ENCODE measurements at regions of chr1 and their contacts with region 1.

Region 1: GRCh38 chr1:94854458-94855306 is 34.5 kb downstream of the SLC44A3 start:
- DNase-seq: peak; percentile 83
- ATAC-seq: peak; percentile 96 to 97
- H3K4me3 ChIP-seq: peak overlapping the region; percentile 50
- H3K27ac ChIP-seq: peak overlapping the region; percentile 80 to 89
- H3K4me1 ChIP-seq: peaks cover 17% of the 10 kb centered on the region
- CTCF ChIP-seq: peak; percentile 72
- EP300 ChIP-seq: no peak
- POLR2A ChIP-seq: no peak
- RAD21 ChIP-seq: peak; percentile 89 to 91

Region 2: GRCh38 chr1:94843430-94843829 is 11.3 kb before region 1 on chr1:
- CTCF ChIA-PET with region 1: interaction called, 37 read pairs
- POLR2A ChIA-PET with region 1: interaction called, 4 read pairs
- DNase-seq: no peak
- ATAC-seq: no peak
- H3K4me3 ChIP-seq: no peak overlapping the region
- H3K27ac ChIP-seq: no peak overlapping the region
- H3K4me1 ChIP-seq: no peaks in the 10 kb centered on the region
- CTCF ChIP-seq: no peak
- EP300 ChIP-seq: no peak
- POLR2A ChIP-seq: no peak
- RAD21 ChIP-seq: no peak

Region 3: GRCh38 chr1:94903280-94904009 is 48.8 kb after region 1 on chr1:
- CTCF ChIA-PET with region 1: interaction called, 23 read pairs
- POLR2A ChIA-PET with region 1: no interaction called
- DNase-seq: no peak
- ATAC-seq: no peak; a peak in 1 of 6 replicates
- H3K4me3 ChIP-seq: no peak overlapping the region
- H3K27ac ChIP-seq: 0 out of 6 replicates have a peak overlapping the region, but pooled peaks of 1 of the 2 experiments have one; percentile 4
- H3K4me1 ChIP-seq: peaks cover 8% of the 10 kb centered on the region; the same call in 2 of the 3 replicates
- CTCF ChIP-seq: no peak
- EP300 ChIP-seq: no peak
- POLR2A ChIP-seq: no peak
- RAD21 ChIP-seq: no peak

Region 4: DNA sequence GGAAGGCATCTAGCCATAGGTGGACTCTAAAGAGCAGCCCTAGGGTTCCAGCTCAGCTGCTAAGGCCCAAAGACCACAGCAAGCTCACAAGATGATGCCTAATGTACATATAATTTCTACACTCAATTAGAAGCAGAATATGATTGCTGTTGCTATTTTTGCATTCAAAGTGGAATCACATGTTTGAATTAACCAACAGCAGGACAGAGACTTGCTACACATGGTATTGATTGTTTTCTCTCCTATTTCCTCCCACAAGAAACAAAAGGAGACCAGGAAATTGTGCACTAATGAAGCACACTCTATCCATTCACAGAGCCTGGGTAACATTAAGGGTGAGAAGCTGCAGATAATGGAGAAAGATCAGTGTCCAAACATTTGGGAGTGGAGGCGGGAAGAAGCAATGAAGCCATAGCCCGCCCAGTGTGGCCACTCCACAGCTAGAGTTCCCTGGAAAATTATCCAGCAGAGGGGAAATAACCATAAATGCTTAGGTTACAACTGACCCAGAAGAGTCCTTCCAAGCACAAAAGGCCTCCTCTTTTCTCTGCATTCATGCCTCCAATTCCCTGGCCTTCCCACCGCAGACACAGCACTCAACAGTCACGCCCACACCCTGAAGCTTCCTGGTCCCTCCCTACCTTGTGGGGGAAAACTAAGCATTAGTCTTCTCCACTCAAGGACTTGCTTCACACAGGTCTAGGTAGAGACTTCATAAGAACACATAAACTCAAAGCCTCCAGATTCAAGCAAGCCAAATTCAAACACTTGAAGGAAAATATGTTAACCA is 64.8 kb after region 1 on chr1:
- CTCF ChIA-PET with region 1: interaction called, 32 read pairs
- POLR2A ChIA-PET with region 1: no interaction called
- DNase-seq: no peak
- ATAC-seq: no peak; a peak in 1 of 6 replicates
- H3K4me3 ChIP-seq: no peak overlapping the region
- H3K27ac ChIP-seq: no peak overlapping the region
- H3K4me1 ChIP-seq: peaks cover 27% of the 10 kb centered on the region
- CTCF ChIP-seq: no peak
- EP300 ChIP-seq: no peak
- POLR2A ChIP-seq: no peak
- RAD21 ChIP-seq: no peak

Region 5: DNA sequence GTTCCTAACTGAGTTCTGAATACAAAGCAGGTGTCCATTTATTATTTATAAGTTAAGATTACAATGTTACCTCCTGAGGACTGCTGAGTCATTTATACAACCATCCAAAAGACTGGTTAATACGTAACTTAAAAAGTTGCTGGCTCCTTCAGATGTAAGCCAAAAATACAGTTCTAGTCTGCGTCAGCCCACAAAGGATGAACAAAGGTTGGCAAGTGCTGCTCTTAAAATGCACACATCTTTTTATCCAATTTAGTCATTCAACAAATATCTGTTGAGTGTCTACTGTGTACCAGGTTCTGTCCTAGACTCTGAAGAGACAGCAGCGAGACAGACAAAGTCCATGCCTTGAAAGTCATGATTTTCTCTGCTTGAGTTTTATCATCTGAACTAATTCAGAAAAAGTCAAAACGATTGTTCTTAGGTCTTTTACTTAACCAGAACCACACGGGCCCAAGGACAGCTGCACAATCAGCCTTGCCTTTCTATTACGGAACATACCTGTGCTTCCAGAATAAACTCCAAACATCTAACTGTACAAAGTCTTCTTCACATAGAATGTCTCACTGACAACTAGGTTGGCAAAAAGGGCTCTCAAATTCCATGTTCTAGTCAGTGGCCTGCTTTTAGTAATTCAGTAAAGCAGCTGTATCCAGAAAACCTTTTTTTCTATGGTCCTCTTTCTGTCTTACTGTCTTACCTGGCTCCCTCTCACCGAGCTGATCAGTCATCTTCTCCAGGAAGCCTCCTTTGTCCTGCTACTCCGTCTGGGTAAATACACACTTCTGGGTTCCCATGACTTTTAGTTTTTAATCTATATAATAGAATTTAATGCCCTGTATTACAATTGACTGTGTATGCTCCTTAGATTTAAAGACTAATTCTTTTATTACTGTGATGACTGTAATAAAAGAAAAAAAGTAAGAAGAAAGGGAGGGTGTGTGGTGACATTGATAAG is 87.8 kb after region 1 on chr1:
- CTCF ChIA-PET with region 1: interaction called, 10 read pairs
- POLR2A ChIA-PET with region 1: no interaction called
- DNase-seq: peak; percentile 31 to 84
- ATAC-seq: peak; percentile 85 to 86
- H3K4me3 ChIP-seq: no peak overlapping the region
- H3K27ac ChIP-seq: peak overlapping the region; percentile 79 to 87
- H3K4me1 ChIP-seq: peaks cover 57% of the 10 kb centered on the region
- CTCF ChIP-seq: no peak
- EP300 ChIP-seq: peak; percentile 26 to 61; a peak in 1 of 5 replicates
- POLR2A ChIP-seq: no peak
- RAD21 ChIP-seq: peak in 1 of 2 experiments; percentile 18; a peak in 1 of 5 replicates

Region 6: DNA sequence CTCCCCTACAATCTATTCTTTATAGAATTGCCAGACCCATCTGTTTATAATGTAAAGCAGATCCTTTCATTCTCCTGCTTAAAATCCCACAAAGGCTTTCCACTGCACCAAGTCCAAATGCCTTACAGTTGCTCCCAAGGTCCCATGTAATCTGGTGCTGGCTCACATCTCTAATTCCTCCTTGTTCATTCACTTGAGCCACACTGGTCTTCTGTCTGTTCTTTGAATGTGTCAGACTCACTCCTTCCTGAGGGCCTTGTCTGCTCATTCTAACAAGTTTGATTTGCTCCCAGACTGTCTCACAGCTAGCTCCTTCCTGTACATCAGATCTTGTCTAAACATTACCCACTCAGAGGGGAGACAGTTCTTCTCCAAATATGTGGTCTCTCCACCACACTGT is 179.2 kb after region 1 on chr1:
- CTCF ChIA-PET with region 1: interaction called, 149 read pairs
- POLR2A ChIA-PET with region 1: no interaction called
- DNase-seq: no peak
- ATAC-seq: no peak
- H3K4me3 ChIP-seq: no peak overlapping the region
- H3K27ac ChIP-seq: no peak overlapping the region
- H3K4me1 ChIP-seq: no peaks in the 10 kb centered on the region
- CTCF ChIP-seq: no peak
- EP300 ChIP-seq: no peak
- POLR2A ChIP-seq: no peak
- RAD21 ChIP-seq: no peak